Activated naive CD8-positive, alpha-beta T cell treated with anti-CD3 and anti-CD28 coated beads, Interleukin-2, amount 10 ng/mL, durations not matched to agents 7 days and 5 days (primary cell): ENCODE measurements at regions of chr16 and their contacts with region 1.

Region 1: GRCh38 chr16:30984669-30985400 is at the start of gene HSD3B7:
- DNase-seq: peak; percentile 92
- ATAC-seq: peak; percentile 75
- H3K4me3 Mint-ChIP-seq: peak within 1 kb of the TSS; percentile 76
- H3K27ac Mint-ChIP-seq: peak within 1 kb of the TSS; percentile 63
- H3K4me1 Mint-ChIP-seq: peaks cover 7% of the 10 kb centered on the region
- H3K27me3 Mint-ChIP-seq: no peaks in the 10 kb centered on the region
- total RNA-seq, gene HSD3B7: 8.5 to 10.9 TPM

Region 2: DNA sequence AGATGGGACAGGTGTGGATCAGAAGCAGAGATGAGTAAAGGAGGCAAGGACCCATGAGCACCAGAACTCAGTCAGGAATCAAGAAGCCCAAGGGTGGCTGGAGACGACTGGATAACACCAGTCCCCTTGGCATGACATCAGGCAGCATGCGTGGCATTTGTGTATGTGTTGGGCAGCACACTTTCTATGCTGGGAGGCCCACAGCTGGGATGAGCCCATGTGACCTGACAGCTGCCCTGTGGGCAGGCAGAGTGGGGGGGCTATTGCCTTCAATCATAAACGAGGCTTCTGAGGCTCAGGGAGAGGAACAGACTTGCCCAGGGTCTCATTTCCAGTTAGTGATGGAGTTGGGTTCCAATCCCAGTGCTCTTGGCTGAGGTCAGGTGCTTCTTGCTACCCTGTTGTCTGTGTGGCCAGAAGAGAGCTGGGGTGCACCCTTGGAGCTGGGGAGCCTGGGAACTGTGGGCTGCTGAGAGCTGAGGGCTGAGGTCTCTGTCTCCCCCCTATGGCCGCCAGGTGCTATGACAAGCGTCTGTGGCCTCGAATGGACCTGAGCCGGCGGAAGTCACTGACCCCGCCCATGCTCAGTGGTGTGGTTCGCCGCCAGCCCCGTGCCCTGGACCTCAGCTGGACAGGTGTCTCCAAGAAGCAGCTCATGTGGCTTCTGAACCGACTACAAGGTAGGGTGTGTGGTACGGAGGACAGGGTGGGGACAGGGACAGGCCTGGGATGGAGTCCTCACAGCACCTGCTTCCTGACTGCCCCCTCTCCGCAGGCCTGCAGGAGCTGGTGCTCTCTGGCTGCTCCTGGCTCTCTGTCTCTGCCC is 43.0 kb before region 1 on chr16:
- POLR2A ChIA-PET with region 1: no interaction called
- DNase-seq: peak; percentile 78
- ATAC-seq: peak; percentile 90
- H3K4me3 Mint-ChIP-seq: peak overlapping the region; percentile 74
- H3K27ac Mint-ChIP-seq: peak overlapping the region; percentile 82
- H3K4me1 Mint-ChIP-seq: peaks cover 26% of the 10 kb centered on the region
- H3K27me3 Mint-ChIP-seq: no peaks in the 10 kb centered on the region

Region 3: DNA sequence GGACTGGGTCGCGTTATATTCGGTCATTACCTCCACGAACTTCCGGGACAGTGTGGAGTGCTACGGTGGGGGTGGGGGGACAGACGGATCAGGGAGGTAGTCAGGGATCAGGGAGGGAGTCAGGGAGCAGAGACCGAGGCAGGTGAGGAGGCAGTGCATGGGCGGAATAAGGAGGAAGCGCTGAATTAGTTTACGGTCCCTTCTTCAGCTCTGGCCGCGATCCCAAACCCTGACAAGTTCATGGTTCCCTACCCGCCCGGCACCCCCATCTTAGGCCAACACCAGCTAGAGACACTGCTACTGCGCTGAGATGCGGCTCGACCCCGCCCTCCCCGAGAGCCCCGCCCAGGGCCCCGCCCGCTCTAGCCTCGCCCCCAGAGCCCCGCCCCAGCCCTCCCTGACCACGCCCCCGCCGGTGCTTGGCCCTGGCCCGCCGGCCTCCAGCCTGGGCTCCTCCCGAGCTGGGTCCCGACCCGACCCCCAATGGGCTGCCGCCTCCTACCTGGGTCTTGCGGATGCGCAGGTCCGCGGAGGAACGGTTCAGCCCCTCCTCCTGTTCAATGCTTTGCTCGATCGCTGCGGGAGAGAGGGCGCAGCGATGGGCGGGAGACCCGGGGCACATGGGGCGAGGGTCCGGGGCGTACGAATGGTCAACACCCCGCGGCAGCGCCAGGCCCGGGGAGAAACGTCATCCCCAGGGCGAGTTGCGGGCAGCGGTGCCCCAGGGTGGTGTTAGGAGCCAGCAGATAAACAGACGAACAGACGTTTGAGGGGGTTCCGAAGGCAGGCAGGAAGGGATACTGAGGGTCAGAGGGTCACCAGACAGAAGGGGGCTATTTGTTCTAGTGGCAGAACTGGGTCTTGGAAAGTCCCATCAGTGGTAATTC is 12.4 kb after region 1 on chr16:
- POLR2A ChIA-PET with region 1: interaction called, 12 read pairs
- DNase-seq: peak; percentile 86
- ATAC-seq: peak; percentile 97
- H3K4me3 Mint-ChIP-seq: peak overlapping the region; percentile 98
- H3K27ac Mint-ChIP-seq: peak overlapping the region; percentile 95
- H3K4me1 Mint-ChIP-seq: peaks cover 12% of the 10 kb centered on the region
- H3K27me3 Mint-ChIP-seq: peaks cover 5% of the 10 kb centered on the region